ENCODE measurements at regions of chr3 and their contacts with region 1.

Region 1: GRCh38 chr3:197501879-197502620 is 53.7 kb downstream of the BDH1 start:
- DNase-seq: no peak
- ATAC-seq: peak; percentile 64
- H3K4me3 ChIP-seq: no peak overlapping the region
- H3K27ac ChIP-seq: no peak overlapping the region
- H3K4me1 ChIP-seq: no peaks in the 10 kb centered on the region; the same call in 1 of the 2 replicates
- H3K27me3 ChIP-seq: no peaks in the 10 kb centered on the region
- CTCF ChIP-seq: peak; percentile 40; the same call in 1 of the 2 replicates

Region 2: DNA sequence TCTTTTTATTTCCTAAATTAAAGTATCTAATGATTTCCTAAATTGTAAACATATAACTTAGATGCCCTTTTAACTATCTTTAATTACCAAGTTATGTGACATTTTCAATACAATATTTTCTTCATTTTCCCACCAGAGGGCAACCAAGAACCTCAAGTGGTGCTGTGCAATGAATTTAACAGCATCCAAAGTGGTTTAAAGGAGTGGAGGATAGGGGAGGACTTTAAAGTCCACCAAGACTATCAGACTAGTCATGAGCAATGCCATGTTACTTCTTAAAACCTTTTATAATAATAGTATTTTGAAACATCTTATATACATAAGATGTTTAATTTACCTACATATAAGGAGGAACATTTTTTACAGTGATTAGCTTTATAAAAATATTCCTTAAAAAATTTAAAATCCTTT is 278.0 kb before region 1 on chr3:
- CTCF ChIA-PET with region 1: no interaction called
- POLR2A ChIA-PET with region 1: no interaction called
- in situ Hi-C with region 1: no loop called
- intact Hi-C with region 1: loop called (anchors 10 kb)
- DNase-seq: peak; percentile 18
- ATAC-seq: peak; percentile 83
- H3K4me3 ChIP-seq: no peak overlapping the region
- H3K27ac ChIP-seq: no peak overlapping the region
- H3K4me1 ChIP-seq: peaks cover 11% of the 10 kb centered on the region
- H3K27me3 ChIP-seq: no peaks in the 10 kb centered on the region
- CTCF ChIP-seq: peak; percentile 78; the same call in 1 of the 2 replicates

Region 3: DNA sequence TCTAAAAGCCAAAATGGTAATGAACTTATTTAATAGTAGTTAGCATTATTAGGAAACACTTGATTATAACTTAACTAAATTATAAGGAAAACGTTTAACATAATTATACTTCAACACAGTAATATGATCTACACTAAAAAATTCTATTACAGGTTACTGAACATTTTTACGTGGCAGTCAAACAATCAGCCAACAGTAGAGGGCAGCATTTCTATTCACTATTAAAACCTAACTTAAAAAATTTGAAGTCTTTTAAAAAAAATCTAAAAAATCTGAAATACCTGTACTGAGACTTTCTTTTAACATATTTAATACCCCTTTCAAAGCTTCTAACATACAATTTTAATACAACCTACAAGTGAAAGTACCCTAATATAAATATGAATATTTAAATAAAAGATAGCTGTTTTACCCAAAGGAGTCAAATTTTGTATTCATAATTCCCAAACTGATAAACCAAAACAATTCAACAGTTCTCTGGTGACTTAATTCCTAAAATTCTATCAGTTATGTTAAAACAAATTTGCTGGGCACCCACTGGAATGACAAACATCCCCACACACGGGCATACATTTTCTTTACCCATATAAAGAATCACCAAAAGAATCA is 245.1 kb before region 1 on chr3:
- CTCF ChIA-PET with region 1: no interaction called
- POLR2A ChIA-PET with region 1: no interaction called
- in situ Hi-C with region 1: no loop called
- intact Hi-C with region 1: loop called (anchors 10 kb)
- DNase-seq: peak; percentile 24
- ATAC-seq: no peak
- H3K4me3 ChIP-seq: no peak overlapping the region
- H3K27ac ChIP-seq: no peak overlapping the region
- H3K4me1 ChIP-seq: 0 out of 2 replicates have a peak, but pooled peaks cover 5% of the 10 kb centered on the region
- H3K27me3 ChIP-seq: no peaks in the 10 kb centered on the region
- CTCF ChIP-seq: peak; percentile 58; the same call in 1 of the 2 replicates

Region 4: DNA sequence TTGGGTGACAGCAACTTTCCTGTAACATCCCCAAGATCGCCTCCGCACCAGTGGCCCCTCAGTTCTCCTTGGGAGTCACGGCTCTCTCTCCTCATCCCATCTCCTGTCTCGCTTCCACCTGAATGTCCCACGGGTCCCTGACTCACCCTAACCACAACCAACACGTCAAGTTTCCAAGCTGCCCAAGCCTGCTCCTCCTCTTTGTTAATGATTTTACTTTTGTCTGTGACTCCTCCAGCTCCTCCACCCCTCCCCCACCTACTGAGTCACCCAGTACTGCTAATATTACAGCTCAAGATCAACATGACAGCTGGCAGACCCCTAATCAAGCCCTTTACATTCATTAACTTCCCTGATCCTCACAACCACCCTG is 14.5 kb after region 1 on chr3:
- CTCF ChIA-PET with region 1: no interaction called
- POLR2A ChIA-PET with region 1: no interaction called
- in situ Hi-C with region 1: no loop called
- intact Hi-C with region 1: no loop called
- DNase-seq: peak; percentile 67
- ATAC-seq: no peak
- H3K4me3 ChIP-seq: no peak overlapping the region
- H3K27ac ChIP-seq: no peak overlapping the region
- H3K4me1 ChIP-seq: 0 out of 2 replicates have a peak, but pooled peaks cover 4% of the 10 kb centered on the region
- H3K27me3 ChIP-seq: no peaks in the 10 kb centered on the region
- CTCF ChIP-seq: no peak

Measured in Panc1 (cell line).